Esophagus squamous epithelium (tissue), 5 donors: ENCODE measurements at regions of chr1 and their contacts with region 1.

Region 1: GRCh38 chr1:9292361-9293240 is at the start of gene SPSB1:
- DNase-seq: no peak
- H3K4me3 ChIP-seq: peak within 1 kb of the TSS; percentile 85 to 99 (median 90)
- H3K27ac ChIP-seq: peak within 1 kb of the TSS; percentile 94 to 100 (median 96)
- H3K4me1 ChIP-seq: peaks cover 35 to 72% (median 62%) of the 10 kb centered on the region in 3 donors
- H3K27me3 ChIP-seq: no peaks in the 10 kb centered on the region
- CTCF ChIP-seq: peak in 2 of 6 experiments; percentile 1 to 16
- POLR2A ChIP-seq: peak in 3 of 4 donors; percentile 32 to 98 (median 90)
- total RNA-seq, gene SPSB1: 15.2 to 35.5 (median 25.2) TPM

Region 2: DNA sequence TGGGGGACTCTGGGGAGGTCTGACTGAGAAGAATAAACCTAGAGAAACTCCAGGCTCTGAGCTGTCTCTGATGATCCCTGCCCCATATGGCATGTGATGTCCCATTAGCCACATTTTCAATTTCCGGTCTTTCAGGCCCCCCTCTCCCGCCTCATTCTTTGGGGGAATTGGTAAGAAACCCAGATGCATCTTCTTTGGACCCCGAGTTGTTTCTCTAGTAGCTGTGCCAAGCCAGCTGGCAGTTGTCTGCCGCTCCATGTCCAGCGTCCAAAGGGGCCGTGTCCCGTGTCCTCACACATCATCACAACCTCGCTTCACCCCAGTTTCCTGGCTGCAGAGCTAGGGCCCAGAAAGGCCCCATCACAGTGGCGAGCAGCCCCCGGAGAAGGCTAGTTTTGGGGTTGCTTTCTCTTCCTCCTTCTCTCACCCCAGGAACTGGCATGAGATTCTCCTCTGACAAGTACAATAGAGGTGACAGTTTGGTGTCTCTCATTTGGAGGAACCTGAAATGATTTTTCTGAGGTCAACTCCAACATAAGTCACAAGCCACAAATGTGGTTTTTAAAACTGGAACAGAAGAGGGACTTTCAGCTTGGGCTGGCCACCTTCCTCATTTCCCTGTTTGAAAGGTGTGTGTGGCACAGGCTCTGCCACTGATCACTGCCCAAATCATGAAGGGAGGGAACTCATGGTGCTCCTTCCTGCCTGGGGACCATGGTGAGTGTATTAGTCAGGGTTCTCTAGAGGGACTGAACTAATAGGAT is 157.3 kb before region 1 on chr1:
- intact Hi-C with region 1: no loop called
- DNase-seq: no peak
- H3K4me3 ChIP-seq: no peak overlapping the region
- H3K27ac ChIP-seq: peak overlapping the region in 1 of 4 donors; percentile 25
- H3K4me1 ChIP-seq: peaks cover 0 to 9% (median 0%) of the 10 kb centered on the region in 3 donors
- H3K27me3 ChIP-seq: no peaks in the 10 kb centered on the region
- CTCF ChIP-seq: no peak
- POLR2A ChIP-seq: no peak

Region 3: GRCh38 chr1:9371391-9371935 is 78.9 kb after region 1 on chr1:
- intact Hi-C with region 1: loop called (anchors 10 kb)
- DNase-seq: no peak
- H3K4me3 ChIP-seq: no peak overlapping the region
- H3K27ac ChIP-seq: peak overlapping the region; percentile 62 to 92 (median 90)
- H3K4me1 ChIP-seq: peaks cover 35 to 99% (median 64%) of the 10 kb centered on the region in 3 donors
- H3K27me3 ChIP-seq: no peaks in the 10 kb centered on the region
- CTCF ChIP-seq: no peak
- POLR2A ChIP-seq: no peak

Region 4: DNA sequence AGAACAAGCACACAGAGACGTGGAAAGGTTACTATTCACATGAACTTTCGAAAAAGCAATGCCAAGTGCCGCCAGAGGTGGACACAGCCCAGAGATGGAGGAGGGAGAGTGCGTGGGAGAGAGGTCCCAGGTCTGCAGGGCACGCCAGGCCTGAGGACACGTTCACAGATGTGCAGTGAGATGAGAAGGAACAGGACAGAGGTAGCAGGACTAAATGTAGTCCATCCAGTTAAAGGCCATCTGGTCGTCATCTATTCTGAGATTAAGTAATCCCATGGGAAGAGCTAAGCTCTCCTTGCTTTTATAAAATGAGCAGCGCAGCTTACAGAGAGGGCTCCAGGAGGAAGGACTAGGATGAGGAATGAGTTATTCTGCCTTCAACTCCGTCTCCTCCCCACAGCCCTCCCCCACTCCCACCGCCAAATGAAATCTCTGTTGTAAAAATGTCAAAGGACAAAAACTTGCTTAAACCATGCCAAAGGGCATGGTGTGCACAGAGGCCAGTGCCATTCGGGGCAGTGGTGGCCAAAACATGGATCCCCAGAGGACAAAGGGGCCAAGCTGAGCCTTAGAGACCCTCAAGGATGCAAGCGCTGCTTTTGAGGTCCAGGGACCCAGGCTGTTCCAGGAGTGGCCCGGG is 161.3 kb after region 1 on chr1:
- intact Hi-C with region 1: loop called (anchors 5 kb)
- DNase-seq: no peak
- H3K4me3 ChIP-seq: no peak overlapping the region
- H3K27ac ChIP-seq: no peak overlapping the region
- H3K4me1 ChIP-seq: peaks cover 9 to 55% (median 18%) of the 10 kb centered on the region in 3 donors
- H3K27me3 ChIP-seq: no peaks in the 10 kb centered on the region
- CTCF ChIP-seq: no peak
- POLR2A ChIP-seq: no peak

Region 5: DNA sequence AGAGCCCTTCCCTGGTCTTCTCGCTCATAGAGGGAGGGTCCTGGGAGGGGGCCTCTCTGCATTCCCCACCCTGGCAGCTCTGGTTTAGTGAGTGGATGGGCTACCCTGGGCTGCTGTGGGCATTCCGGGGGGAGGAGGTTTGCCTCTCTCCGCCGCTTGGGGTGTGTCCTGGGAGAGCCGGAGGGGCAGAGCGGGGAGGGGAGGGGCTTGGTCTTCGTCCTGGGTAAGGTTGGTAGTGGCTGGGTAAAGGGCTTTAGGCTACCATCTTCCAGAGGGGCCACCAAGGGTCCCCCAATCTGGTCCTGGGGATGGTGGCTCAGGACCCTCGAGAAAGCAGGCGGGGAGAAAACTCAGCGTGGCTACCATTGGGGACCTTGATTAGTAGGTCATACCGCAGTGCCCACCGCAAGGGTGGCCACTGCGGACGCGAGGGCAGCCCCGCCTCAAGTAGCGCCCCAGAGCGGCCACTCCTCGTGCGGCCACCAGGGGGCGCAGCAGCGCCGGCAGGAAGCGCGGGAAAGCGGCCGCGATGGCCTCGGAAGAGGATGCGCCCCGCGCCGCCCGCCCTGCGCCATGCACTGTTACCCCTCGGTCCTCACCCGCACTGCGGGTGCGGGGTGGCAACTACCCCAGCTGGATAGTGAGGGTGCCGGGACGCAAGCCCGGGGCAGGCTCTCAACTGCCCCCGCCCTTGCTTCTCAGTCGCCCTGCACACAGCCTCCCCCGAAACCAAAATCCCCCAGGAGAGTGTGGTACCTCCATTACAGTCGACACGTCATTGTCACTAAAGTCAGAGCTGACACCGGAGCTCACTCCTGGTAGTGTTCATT is 202.5 kb after region 1 on chr1:
- intact Hi-C with region 1: loop called (anchors 5 kb)
- DNase-seq: no peak
- H3K4me3 ChIP-seq: peak overlapping the region in 3 of 4 donors; percentile 19 to 57 (median 27)
- H3K27ac ChIP-seq: no peak overlapping the region
- H3K4me1 ChIP-seq: peaks cover 7 to 17% (median 12%) of the 10 kb centered on the region in 3 donors
- H3K27me3 ChIP-seq: peaks cover 0 to 14% (median 0%) of the 10 kb centered on the region in 4 donors
- CTCF ChIP-seq: peak; percentile 95 to 100 (median 98)
- POLR2A ChIP-seq: no peak